ENCODE measurements at regions of chr6 and their contacts with region 1.

Region 1: GRCh38 chr6:104789770-104790190 is 69.9 kb downstream of the HACE1 start:
- DNase-seq: peak; percentile 23 to 52 (median 51)
- H3K4me3 ChIP-seq: no peak overlapping the region
- H3K27ac ChIP-seq: no peak overlapping the region
- H3K4me1 ChIP-seq: peaks cover 0 to 15% (median 5%) of the 10 kb centered on the region in 4 experiments
- H3K27me3 ChIP-seq: no peaks in the 10 kb centered on the region

Region 2: GRCh38 chr6:104768906-104769305 is 20.9 kb before region 1 on chr6:
- CTCF ChIA-PET with region 1: no interaction called
- POLR2A ChIA-PET with region 1: no interaction called
- DNase-seq: no peak
- H3K4me3 ChIP-seq: no peak overlapping the region
- H3K27ac ChIP-seq: no peak overlapping the region
- H3K4me1 ChIP-seq: peaks cover 0 to 12% (median 7%) of the 10 kb centered on the region in 4 experiments
- H3K27me3 ChIP-seq: no peaks in the 10 kb centered on the region

Region 3: DNA sequence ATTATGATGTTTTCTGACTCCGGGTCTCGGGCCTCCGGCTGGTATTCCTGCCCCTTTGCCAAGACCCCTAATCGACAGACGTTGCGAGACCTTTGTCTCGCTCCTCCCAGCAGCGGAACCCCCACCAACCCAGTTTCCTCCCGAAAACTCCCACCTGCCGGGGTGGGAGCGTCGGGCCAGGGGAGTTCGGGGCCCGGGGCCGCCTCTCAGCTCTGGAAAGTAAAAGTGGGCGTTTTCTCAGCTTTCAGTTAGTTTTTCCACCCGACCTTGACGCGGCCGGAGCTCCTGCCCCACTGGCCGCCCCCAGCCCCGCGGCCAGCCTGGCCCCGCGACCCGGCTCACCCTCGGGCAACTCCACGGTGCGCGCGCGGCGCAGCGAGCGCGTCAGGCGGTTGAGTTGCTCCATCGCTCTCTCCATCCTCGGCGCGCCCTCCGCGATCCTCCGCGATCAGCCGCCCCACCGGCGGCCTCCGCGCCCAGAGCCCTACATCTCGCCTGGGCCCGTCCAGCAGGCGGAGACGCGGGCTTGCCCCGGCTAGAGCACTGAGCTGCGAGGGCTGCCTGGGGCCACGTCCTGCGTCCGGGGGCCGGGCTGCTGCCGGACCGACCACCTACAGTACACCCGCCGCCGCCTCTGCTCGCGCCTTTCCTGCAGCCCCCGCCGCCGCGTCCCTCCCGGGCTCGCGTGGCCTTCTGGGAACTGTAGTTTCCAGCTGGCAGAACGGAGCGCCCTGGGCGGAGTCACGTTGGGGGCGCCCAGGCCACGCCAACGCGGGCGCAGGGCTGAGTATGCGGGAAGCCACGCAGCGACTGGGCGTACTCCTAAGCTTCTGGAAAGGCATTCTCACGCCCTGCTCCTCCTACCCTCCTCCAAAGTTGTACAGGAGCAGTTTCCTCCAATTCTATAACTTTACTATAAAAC is 69.7 kb after region 1 on chr6 and contains the start of gene HACE1:
- CTCF ChIA-PET with region 1: interaction called, 10 read pairs
- POLR2A ChIA-PET with region 1: no interaction called
- DNase-seq: peak; percentile 82 to 92 (median 86)
- H3K4me3 ChIP-seq: peak within 1 kb of the TSS; percentile 65 to 97 (median 90)
- H3K27ac ChIP-seq: peak within 1 kb of the TSS in 1 of 2 experiments; percentile 76
- H3K4me1 ChIP-seq: peaks cover 4 to 13% (median 8%) of the 10 kb centered on the region in 4 experiments
- H3K27me3 ChIP-seq: peaks cover 0 to 2% (median 0%) of the 10 kb centered on the region in 5 experiments

Region 4: GRCh38 chr6:105077596-105078385 is 288.0 kb after region 1 on chr6:
- CTCF ChIA-PET with region 1: interaction called, 12 read pairs
- POLR2A ChIA-PET with region 1: no interaction called
- DNase-seq: peak; percentile 49 to 70 (median 67)
- H3K4me3 ChIP-seq: no peak overlapping the region
- H3K27ac ChIP-seq: no peak overlapping the region
- H3K4me1 ChIP-seq: no peaks in the 10 kb centered on the region
- H3K27me3 ChIP-seq: no peaks in the 10 kb centered on the region

Measured in common myeloid progenitor, CD34-positive (primary cell).